Spleen (tissue), 13 donors: ENCODE measurements at regions of chr20 and their contacts with region 1.

Region 1: GRCh38 chr20:34872622-34873224 is at the start of gene GGT7:
- DNase-seq: peak; percentile 96
- H3K4me3 ChIP-seq: peak within 1 kb of the TSS; percentile 45 to 73 (median 54)
- H3K27ac ChIP-seq: peak within 1 kb of the TSS in 7 of 8 donors; percentile 38 to 80 (median 62)
- H3K4me1 ChIP-seq: peaks cover 19 to 65% (median 53%) of the 10 kb centered on the region in 6 donors
- H3K27me3 ChIP-seq: no peaks in the 10 kb centered on the region
- CTCF ChIP-seq: peak; percentile 40 to 95 (median 82)
- POLR2A ChIP-seq: no peak
- total RNA-seq, gene GGT7: 9.7 to 22.1 (median 13.0) TPM

Region 2: DNA sequence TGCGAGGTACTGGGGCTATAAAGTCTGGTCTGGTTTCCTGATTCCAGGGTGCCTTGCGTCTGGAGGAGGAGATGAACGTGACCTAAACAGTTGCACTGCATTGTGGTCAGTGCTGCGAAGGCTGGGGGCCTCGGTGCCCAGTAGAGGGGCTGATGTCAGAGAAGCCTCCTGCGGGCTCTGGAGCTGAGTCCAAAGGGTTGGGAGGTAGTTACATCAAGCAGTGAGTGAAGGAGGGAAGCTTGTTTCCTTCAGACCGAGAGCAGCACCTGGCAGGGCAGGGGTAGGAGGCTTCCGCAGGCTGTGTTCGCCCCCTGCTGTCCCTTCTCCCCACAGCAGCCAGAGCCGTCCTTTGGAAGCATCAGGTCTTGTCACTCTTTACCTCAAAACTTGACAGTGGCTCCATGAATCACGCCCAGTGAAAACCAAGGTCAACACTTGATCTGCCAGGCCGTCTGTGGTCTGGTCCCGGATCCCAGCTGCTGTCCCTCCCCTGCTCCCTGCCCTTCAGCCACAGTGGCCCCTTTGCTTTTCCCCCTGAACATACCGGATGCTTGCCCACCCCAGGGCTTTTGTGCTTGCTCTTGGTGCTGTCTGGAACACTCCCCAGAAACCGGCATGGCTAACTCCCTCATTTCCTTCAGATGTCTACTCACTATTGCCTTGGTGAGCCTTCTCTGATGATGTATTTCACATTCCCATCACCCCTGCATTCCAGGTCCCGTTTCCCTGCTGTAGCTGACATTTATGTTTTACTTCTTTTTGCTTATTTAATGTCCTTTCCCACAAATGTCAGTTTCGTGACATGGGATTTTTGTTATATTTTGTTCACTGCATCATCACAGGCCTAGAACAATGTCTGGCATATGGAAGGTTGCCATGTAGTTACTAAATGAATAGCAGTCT is 349.5 kb before region 1 on chr20:
- intact Hi-C with region 1: no loop called
- DNase-seq: no peak
- H3K4me3 ChIP-seq: no peak overlapping the region
- H3K27ac ChIP-seq: peak overlapping the region in 3 of 8 donors; percentile 15 to 43 (median 34)
- H3K4me1 ChIP-seq: peaks cover 16 to 84% (median 54%) of the 10 kb centered on the region in 6 donors
- H3K27me3 ChIP-seq: no peaks in the 10 kb centered on the region
- CTCF ChIP-seq: peak in 8 of 11 experiments; percentile 41 to 57 (median 48)
- POLR2A ChIP-seq: no peak

Region 3: DNA sequence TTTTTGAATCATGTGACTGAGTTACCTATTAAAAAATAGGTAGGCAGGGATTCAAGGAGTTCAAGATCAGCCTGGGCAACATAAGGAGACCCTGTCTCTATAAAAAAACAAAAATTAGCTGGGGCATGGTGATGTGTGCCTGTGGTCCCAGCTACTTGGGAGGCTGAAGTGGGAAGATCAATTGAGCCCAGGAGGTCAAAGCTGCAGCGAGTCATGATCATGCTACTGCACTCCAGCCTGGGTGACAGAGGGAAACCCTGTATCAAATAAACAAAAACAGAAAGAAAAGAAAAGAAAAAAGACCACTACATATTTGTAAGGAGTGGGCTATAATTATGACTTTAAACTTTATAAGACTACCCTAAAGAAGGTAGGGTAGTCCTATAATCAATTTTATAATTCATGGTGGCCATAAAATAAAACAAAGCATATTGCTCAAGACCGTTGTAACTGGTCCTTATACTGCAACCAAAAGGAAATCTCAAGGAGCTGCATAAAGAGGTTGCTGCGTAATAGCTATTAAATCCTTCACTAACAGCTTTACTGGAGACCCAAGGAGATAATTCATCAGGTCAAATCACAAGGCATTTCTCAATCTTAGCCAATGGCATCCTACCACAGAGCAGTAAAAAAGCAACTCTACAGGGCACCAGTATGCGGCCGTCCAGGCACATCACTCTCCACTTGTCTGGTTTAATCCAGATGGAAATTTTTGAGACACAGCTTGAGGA is 209.3 kb before region 1 on chr20:
- intact Hi-C with region 1: no loop called
- DNase-seq: no peak
- H3K4me3 ChIP-seq: no peak overlapping the region
- H3K27ac ChIP-seq: no peak overlapping the region
- H3K4me1 ChIP-seq: no peaks in the 10 kb centered on the region
- H3K27me3 ChIP-seq: no peaks in the 10 kb centered on the region
- CTCF ChIP-seq: no peak
- POLR2A ChIP-seq: no peak

Region 4: GRCh38 chr20:34955232-34956040 is 82.7 kb after region 1 on chr20 and contains the starts of genes GSS and MYH7B:
- intact Hi-C with region 1: loop called (anchors 5 kb)
- DNase-seq: peak; percentile 99
- H3K4me3 ChIP-seq: peak within 1 kb of the TSS; percentile 59 to 81 (median 74)
- H3K27ac ChIP-seq: peak within 1 kb of the TSS; percentile 43 to 94 (median 89)
- H3K4me1 ChIP-seq: peaks cover 3 to 28% (median 19%) of the 10 kb centered on the region in 6 donors
- H3K27me3 ChIP-seq: no peaks in the 10 kb centered on the region
- CTCF ChIP-seq: peak in 10 of 11 experiments; percentile 27 to 66 (median 55)
- POLR2A ChIP-seq: peak in 1 of 3 donors; percentile 67
- total RNA-seq, gene GSS: 23.8 to 46.1 (median 31.8) TPM
- total RNA-seq, gene MYH7B: 0.09 to 1.7 (median 0.60) TPM

Region 5: DNA sequence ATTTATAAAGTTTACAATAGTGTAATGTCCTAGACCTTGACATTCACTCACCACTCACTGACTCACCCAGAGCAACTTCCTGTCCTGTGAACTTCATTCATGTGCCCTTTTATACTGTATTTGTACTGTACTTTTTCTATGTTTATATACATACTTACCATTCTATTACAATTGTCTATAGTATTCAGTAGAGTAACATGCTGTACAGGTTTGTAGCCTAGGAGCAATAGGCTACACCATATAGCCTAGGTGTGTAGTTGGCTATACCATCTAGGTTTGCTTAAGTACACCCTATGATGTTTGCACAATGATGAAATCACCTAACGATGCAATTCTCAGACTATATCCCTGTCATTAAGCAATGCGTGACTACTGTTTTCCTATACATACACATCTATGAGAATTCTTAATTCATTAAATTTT is 256.9 kb after region 1 on chr20:
- intact Hi-C with region 1: no loop called
- DNase-seq: no peak
- H3K4me3 ChIP-seq: no peak overlapping the region
- H3K27ac ChIP-seq: peak overlapping the region in 2 of 8 donors; percentile 13 to 28
- H3K4me1 ChIP-seq: peaks cover 0 to 24% (median 8%) of the 10 kb centered on the region in 6 donors
- H3K27me3 ChIP-seq: no peaks in the 10 kb centered on the region
- CTCF ChIP-seq: no peak
- POLR2A ChIP-seq: no peak